Head of caudate nucleus (tissue), 42 donors: ENCODE measurements at regions of chr17 and their contacts with region 1.

Region 1: GRCh38 chr17:47802341-47803022 is 19.1 kb downstream of the OSBPL7 start:
- DNase-seq: peak; percentile 13 to 82 (median 54)

Region 2: GRCh38 chr17:47698749-47699535 is 103.5 kb before region 1 on chr17:
- intact Hi-C with region 1: loop called (anchors 10 kb)
- DNase-seq: peak in 41 of 42 donors; percentile 53 to 89 (median 76)

Region 3: GRCh38 chr17:48011405-48012150 is 209.1 kb after region 1 on chr17:
- intact Hi-C with region 1: no loop called
- DNase-seq: peak in 4 of 42 donors; percentile 25 to 56 (median 46)

Region 4: DNA sequence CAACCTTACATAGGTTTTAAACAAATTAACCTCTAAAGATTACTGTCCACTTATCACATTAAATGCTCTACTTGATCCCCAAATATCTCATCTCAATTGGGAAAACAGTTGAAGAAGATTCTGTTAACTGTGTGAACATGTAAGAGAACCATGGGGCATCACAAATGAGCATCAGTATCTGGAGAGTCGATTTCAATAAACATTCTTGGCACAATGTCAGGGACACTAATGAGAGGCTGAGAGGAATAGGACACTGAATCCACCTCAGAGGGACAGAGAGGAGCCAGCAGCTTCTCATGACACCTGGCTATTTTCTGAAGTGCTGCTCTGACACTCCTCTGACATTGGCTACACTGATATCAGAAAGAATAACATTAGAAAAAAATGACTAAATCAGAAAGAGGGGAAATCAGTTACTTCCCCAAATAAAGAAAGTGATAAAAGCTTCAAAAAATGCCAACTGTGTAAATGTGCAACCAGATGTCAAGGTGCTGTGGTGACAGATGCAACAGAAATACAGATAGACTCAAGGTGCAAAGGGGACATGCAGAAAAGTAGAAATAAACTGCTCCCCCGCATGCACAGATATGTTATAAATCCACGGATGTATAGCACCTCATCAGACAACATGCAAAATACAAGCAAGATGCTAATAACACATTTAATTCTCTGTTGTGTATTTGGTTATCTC is 372.5 kb after region 1 on chr17:
- intact Hi-C with region 1: no loop called
- DNase-seq: no peak